CD14-positive monocyte (primary cell): ENCODE measurements at regions of chr11 and their contacts with region 1.

Region 1: GRCh38 chr11:66616379-66617154 is at the start of gene RBM14:
- DNase-seq: peak; percentile 98 to 99 (median 99)
- H3K4me3 ChIP-seq: peak within 1 kb of the TSS; percentile 71 to 99 (median 82)
- H3K4me3 Mint-ChIP-seq: peak within 1 kb of the TSS; percentile 94 to 98
- H3K27ac ChIP-seq: peak within 1 kb of the TSS; percentile 91 to 99
- H3K27ac Mint-ChIP-seq: peak within 1 kb of the TSS; percentile 96 to 99 (median 98)
- H3K4me1 ChIP-seq: peaks cover 32 to 38% of the 10 kb centered on the region in 2 donors
- H3K4me1 Mint-ChIP-seq: peaks cover 38% of the 10 kb centered on the region
- H3K27me3 ChIP-seq: no peaks in the 10 kb centered on the region
- H3K27me3 Mint-ChIP-seq: peaks cover 0 to 2% (median 2%) of the 10 kb centered on the region in 3 donors
- CTCF ChIP-seq: no peak
- polyA plus RNA-seq, gene RBM14: 21.9 to 46.7 (median 42.6) TPM

Region 2: DNA sequence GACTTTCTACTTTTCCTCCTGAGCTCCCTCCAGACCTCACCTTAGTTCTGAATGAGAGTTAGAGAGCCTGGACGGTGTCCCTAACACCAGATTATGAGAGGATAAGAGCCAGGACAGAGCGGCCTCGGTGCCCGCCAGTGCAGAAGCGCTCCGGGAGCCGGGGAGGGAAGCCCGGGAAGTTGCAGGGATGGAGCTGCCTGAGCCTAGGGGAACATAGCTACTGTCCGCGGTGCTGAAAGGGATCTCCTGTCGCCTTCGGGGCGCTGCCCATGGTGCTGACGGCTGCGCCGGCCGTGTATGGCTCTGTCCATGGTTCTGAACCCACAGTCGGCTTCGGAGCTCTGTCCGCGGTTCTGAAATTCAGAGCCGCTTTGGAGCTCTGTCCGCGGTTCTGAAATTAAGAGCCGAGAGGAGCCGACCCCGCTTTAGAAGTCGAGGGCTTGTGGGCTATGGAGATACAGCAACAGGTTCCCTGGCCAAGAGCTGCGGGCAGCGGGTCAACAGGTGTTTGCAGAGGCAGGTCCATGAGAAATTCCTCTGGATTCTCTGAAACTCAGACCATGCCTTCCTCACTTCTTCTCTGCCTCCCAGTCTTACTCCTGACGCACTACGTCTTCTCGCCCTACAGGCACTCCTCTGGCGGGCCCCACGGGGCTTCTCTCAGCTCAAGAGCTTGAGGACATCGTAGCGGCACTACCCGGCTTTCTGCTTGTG is 194.9 kb before region 1 on chr11:
- intact Hi-C with region 1: no loop called
- DNase-seq: peak; percentile 63 to 76 (median 68)
- H3K4me3 ChIP-seq: no peak overlapping the region
- H3K4me3 Mint-ChIP-seq: peak overlapping the region in 1 of 2 donors; percentile 36
- H3K27ac ChIP-seq: no peak overlapping the region
- H3K27ac Mint-ChIP-seq: peak overlapping the region in 1 of 7 donors; percentile 45
- H3K4me1 ChIP-seq: no peaks in the 10 kb centered on the region
- H3K4me1 Mint-ChIP-seq: peaks cover 8% of the 10 kb centered on the region
- H3K27me3 ChIP-seq: peaks cover 14 to 30% of the 10 kb centered on the region in 2 donors
- H3K27me3 Mint-ChIP-seq: peaks cover 26 to 41% (median 35%) of the 10 kb centered on the region in 3 donors
- CTCF ChIP-seq: no peak

Region 3: DNA sequence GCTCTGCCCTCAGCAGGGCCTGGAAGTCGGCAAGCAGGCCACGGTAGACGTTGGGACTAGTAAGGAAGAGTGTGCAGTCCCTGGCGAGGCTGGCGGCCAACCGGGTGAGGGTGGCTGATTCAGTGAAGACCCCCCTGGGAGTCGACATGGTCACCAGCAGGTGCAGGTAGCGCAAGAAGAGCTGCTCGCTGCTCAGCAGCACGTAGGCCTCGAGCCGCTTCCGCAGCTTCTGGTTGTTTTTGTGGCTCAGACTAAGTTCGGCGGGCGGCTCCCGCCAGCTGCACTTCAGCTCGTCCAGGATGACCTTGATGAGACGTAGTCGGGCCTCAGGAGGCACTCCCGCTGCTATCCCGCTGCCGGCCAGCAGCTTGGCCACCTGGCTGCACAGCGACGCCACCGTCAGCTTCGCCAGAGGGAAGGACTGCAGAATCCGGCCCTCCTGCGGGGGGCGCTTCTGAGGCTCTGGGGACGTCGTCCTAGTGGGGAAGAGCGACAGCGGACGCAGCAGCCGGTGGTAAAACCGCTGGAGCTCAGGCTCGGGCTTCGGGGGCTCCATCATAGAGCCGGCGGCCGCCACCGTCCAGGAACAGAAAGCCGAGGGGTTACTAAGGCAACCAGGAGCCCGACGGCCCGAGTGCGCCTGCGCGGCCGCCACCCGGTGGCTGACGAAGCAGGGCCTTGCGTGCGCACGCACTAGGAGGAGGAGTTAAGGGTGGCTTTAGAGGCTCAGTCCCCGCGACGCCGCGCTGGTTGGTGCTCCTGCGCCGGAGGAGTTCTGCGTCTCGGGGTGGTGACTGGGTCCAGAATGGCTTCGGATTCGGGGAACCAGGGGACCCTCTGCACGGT is 23.9 kb before region 1 on chr11 and contains the starts of genes CCDC87 and CCS:
- intact Hi-C with region 1: loop called (anchors 2 kb)
- DNase-seq: peak; percentile 96 to 98 (median 96)
- H3K4me3 ChIP-seq: peak within 1 kb of the TSS; percentile 64 to 84 (median 81)
- H3K4me3 Mint-ChIP-seq: peak within 1 kb of the TSS; percentile 97 to 100
- H3K27ac ChIP-seq: peak within 1 kb of the TSS; percentile 63 to 84
- H3K27ac Mint-ChIP-seq: peak within 1 kb of the TSS; percentile 95 to 99 (median 98)
- H3K4me1 ChIP-seq: peaks cover 14 to 35% of the 10 kb centered on the region in 2 donors
- H3K4me1 Mint-ChIP-seq: peaks cover 26% of the 10 kb centered on the region
- H3K27me3 ChIP-seq: no peaks in the 10 kb centered on the region
- H3K27me3 Mint-ChIP-seq: peaks cover 0 to 1% (median 0%) of the 10 kb centered on the region in 3 donors
- CTCF ChIP-seq: peak; percentile 84
- polyA plus RNA-seq, gene CCDC87: not detected
- polyA plus RNA-seq, gene CCS: 26.9 to 67.9 (median 37.0) TPM

Region 4: GRCh38 chr11:66638177-66639065 is 21.9 kb after region 1 on chr11 and contains the start of gene RBM4:
- intact Hi-C with region 1: loop called in 1 of 2 experiments (anchors 2 kb)
- DNase-seq: peak; percentile 99 to 100 (median 99)
- H3K4me3 ChIP-seq: peak within 1 kb of the TSS; percentile 81 to 99 (median 94)
- H3K4me3 Mint-ChIP-seq: peak within 1 kb of the TSS; percentile 95 to 98
- H3K27ac ChIP-seq: peak within 1 kb of the TSS; percentile 92 to 94
- H3K27ac Mint-ChIP-seq: peak within 1 kb of the TSS; percentile 96 to 99 (median 98)
- H3K4me1 ChIP-seq: peaks cover 43 to 45% of the 10 kb centered on the region in 2 donors
- H3K4me1 Mint-ChIP-seq: peaks cover 50% of the 10 kb centered on the region
- H3K27me3 ChIP-seq: no peaks in the 10 kb centered on the region
- H3K27me3 Mint-ChIP-seq: no peaks in the 10 kb centered on the region
- CTCF ChIP-seq: no peak
- polyA plus RNA-seq, gene RBM4: 112 to 153 (median 153) TPM